Activated B cell treated with CpG ODN at 0.5 μM for 24 hours (primary cell): ENCODE measurements at regions of chr6 and their contacts with region 1.

Region 1: GRCh38 chr6:33788694-33789549 is at the start of gene LEMD2:
- DNase-seq: peak; percentile 96
- ATAC-seq: peak; percentile 92
- H3K4me3 Mint-ChIP-seq: peak within 1 kb of the TSS; percentile 94
- H3K27ac Mint-ChIP-seq: peak within 1 kb of the TSS; percentile 94
- H3K4me1 Mint-ChIP-seq: peaks cover 46% of the 10 kb centered on the region
- H3K27me3 Mint-ChIP-seq: no peaks in the 10 kb centered on the region
- CTCF ChIP-seq: no peak
- total RNA-seq, gene LEMD2: 73.7 and 88.0 TPM in 2 replicates

Region 2: DNA sequence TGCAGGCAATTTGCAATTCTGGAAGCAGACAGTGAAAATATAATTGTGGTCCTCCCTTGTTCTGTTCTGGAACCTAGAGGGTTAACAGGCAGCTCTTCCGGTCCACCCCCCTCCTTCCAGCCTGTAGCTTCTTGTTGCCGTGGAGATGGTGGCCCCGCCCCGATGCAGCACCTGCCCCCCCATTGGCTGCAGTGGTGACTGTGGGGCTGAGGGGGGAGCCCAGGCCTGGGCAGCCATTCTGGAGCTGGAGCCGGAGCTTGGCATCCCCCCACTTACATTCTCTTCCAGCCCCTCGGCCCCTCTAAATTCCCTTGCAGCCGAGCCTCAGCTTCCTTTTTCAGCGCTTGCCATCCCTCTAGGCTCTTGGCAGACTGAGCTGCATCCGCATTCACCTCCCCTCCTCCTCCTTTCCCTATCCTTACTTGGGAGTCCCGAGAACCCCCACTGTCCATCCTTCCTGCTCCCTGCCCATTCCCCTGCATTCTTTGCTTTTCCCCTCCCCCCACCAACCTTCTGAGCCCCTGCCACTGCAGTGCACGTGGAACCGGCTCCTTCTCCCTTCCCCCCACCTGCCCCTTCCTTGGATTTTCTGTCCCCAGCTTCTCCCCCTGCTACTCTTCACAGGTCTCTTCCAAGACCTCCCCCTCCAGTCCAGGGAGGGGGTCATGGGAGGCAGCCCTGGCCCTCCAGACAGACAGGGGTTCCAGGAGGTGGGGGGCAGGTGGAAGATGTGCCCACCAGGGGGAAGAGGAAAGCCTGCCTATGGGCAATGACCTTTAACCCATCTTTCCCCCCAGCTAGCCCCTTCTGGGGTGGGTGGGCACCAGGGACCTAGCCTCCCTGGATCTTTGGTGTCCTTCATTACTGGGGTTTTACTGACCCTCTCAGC is 357.7 kb before region 1 on chr6:
- CTCF ChIA-PET with region 1: no interaction called
- POLR2A ChIA-PET with region 1: no interaction called
- intact Hi-C with region 1: loop called (anchors 5 kb)
- DNase-seq: peak; percentile 69
- ATAC-seq: peak; percentile 56
- H3K4me3 Mint-ChIP-seq: peak overlapping the region; percentile 67
- H3K27ac Mint-ChIP-seq: peak overlapping the region; percentile 60
- H3K4me1 Mint-ChIP-seq: peaks cover 78% of the 10 kb centered on the region
- H3K27me3 Mint-ChIP-seq: no peaks in the 10 kb centered on the region
- CTCF ChIP-seq: no peak

Region 3: GRCh38 chr6:33711140-33712129 is 77.5 kb before region 1 on chr6 and contains the start of gene UQCC2:
- CTCF ChIA-PET with region 1: no interaction called
- POLR2A ChIA-PET with region 1: no interaction called
- intact Hi-C with region 1: loop called (anchors 2 kb)
- DNase-seq: peak; percentile 93
- ATAC-seq: peak; percentile 86
- H3K4me3 Mint-ChIP-seq: peak within 1 kb of the TSS; percentile 98
- H3K27ac Mint-ChIP-seq: peak within 1 kb of the TSS; percentile 99
- H3K4me1 Mint-ChIP-seq: peaks cover 29% of the 10 kb centered on the region
- H3K27me3 Mint-ChIP-seq: no peaks in the 10 kb centered on the region
- CTCF ChIP-seq: no peak
- total RNA-seq, gene UQCC2: 26.2 and 37.5 TPM in 2 replicates

Region 4: DNA sequence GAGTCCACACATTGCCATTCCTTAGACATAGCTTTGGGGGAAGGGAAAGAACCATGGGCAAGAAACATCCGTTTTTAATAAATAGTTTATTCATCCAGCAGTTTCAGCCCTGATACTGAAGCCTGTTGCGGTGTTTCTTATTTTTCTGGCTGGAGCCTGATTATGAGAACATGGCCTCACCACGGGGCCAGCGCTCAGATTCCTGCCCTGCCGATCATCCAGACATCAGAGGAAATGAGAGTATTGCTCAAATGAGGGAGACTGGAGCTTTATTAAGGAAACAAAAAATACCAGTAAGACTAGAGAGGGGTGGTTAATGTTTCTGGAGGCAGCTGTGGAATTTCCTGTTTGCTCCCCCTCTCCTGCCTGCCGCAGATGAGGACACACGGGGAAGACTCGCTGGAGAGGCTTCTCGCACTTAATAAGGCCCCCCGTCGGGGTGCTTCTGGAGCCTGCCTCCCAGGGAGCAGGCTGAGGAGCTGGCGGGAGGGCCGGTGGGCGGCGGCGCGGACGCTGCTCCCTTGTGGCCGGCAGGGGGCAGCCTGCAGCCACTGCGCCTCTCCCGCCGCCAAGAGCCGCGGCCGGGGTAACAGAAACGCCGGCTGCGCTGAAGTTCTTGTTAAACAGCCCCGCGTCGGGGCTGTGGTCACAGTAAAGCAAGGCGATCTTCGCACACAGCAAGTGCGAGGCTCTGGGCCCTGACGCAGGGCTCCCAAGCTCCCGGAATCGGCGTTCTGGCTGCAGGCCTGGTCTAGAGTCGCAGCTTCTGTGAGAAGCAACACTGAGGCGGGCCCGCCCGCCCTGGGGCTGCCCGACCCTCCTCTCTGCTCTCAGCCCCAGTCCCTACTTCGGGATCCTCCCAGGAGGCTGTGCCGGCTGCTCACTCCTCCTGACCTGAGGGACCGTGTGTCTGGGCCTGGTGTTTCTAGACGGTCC is 17.5 kb before region 1 on chr6:
- CTCF ChIA-PET with region 1: interaction called, 6 read pairs
- POLR2A ChIA-PET with region 1: interaction called, 3 read pairs
- intact Hi-C with region 1: loop called (anchors 1 kb)
- DNase-seq: peak; percentile 65
- ATAC-seq: peak; percentile 78
- H3K4me3 Mint-ChIP-seq: no peak overlapping the region
- H3K27ac Mint-ChIP-seq: no peak overlapping the region
- H3K4me1 Mint-ChIP-seq: peaks cover 5% of the 10 kb centered on the region
- H3K27me3 Mint-ChIP-seq: peaks cover 14% of the 10 kb centered on the region
- CTCF ChIP-seq: peak; percentile 91

Region 5: DNA sequence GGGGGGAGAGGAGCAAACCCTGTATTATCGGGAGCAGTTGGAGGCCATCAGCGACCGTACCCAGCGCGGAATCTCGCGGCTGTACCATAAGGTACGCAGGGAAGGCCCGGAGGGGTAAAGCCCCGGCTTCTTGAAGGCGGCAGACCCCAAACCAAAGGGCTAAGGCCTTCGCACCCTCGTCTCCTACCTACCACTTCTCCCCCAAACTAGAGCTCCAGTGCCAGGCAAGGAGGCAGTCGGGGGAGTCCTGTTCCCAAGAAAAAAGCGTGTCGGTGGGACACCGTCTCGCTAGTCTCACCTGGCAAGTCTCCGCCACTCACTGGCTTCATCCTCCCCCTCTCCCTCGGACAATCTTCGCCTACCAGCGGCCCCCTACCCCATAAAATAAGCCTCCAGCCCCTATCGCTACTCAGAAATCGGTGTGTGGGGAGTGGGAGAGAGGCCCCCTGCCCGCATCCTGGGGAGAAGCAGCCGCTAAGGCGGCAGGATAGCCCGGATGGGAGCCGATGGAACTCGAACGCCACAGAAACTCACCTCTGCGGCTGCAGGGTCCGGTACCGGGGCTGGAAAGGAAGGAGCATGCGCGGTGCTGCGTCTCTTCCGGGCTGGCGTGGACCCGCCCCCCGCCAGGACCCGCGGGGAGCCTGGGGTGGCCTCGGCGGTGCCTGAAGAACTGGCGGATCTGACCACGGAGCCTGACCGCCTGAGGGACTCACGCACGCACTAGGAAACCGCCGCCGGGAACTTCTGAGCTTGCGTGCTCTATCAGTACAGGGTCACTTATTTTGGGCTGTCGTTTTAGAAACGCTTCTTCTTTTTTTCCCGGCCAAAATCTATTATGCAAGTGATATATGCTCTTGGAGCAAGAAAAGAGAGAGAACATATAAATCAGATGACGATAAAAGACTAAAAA is 636.8 kb after region 1 on chr6 and contains the start of gene RPS10:
- CTCF ChIA-PET with region 1: no interaction called
- POLR2A ChIA-PET with region 1: interaction called, 4 read pairs
- intact Hi-C with region 1: loop called (anchors 2 kb)
- DNase-seq: peak; percentile 97
- ATAC-seq: peak; percentile 99
- H3K4me3 Mint-ChIP-seq: peak within 1 kb of the TSS; percentile 97
- H3K27ac Mint-ChIP-seq: peak within 1 kb of the TSS; percentile 97
- H3K4me1 Mint-ChIP-seq: peaks cover 29% of the 10 kb centered on the region
- H3K27me3 Mint-ChIP-seq: no peaks in the 10 kb centered on the region
- CTCF ChIP-seq: no peak
- total RNA-seq, gene RPS10: 2,903 and 3,402 TPM in 2 replicates

Region 6: DNA sequence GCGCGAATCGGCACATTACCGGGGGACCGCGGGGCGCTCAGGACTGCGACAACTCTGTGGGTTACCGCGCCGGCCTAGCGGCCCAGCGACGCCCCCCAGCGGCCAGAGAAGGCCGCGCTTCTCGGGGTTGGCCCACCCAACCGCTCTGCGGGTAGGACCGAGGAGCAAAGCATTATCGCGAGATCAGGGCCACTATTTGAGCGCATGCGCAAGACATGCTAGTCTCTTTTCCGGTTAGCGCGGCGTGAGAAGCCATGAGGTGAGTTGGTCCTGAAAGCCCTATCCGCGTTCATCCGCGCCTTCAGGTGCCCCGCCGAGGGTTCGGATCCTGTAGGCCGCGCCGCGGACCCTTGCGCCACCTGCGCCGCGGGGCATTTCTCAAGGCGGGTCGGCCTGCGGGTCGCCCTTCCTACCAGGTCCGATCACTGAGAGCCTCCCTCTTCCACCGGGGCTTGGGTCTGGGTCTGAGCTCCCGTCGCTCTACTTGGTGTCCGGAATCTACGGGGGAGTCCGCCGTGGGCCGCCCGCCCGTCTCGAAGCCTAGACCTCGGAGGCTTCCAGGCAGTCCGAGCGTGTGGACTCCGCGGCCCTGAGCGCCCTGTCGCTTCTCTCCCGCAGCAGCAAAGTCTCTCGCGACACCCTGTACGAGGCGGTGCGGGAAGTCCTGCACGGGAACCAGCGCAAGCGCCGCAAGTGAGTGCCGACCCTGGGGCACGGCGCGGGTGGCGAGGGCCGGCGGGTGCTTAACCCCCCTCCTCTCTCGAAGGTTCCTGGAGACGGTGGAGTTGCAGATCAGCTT is 1679.5 kb after region 1 on chr6 and contains the start of gene RPL10A:
- CTCF ChIA-PET with region 1: no interaction called
- POLR2A ChIA-PET with region 1: no interaction called
- intact Hi-C with region 1: loop called (anchors 5 kb)
- DNase-seq: peak; percentile 87
- ATAC-seq: peak; percentile 85
- H3K4me3 Mint-ChIP-seq: peak within 1 kb of the TSS; percentile 96
- H3K27ac Mint-ChIP-seq: peak within 1 kb of the TSS; percentile 98
- H3K4me1 Mint-ChIP-seq: peaks cover 45% of the 10 kb centered on the region
- H3K27me3 Mint-ChIP-seq: no peaks in the 10 kb centered on the region
- CTCF ChIP-seq: no peak
- total RNA-seq, gene RPL10A: 2,485 and 2,644 TPM in 2 replicates